ENCODE measurements at regions of chr6 and their contacts with region 1.

Region 1: DNA sequence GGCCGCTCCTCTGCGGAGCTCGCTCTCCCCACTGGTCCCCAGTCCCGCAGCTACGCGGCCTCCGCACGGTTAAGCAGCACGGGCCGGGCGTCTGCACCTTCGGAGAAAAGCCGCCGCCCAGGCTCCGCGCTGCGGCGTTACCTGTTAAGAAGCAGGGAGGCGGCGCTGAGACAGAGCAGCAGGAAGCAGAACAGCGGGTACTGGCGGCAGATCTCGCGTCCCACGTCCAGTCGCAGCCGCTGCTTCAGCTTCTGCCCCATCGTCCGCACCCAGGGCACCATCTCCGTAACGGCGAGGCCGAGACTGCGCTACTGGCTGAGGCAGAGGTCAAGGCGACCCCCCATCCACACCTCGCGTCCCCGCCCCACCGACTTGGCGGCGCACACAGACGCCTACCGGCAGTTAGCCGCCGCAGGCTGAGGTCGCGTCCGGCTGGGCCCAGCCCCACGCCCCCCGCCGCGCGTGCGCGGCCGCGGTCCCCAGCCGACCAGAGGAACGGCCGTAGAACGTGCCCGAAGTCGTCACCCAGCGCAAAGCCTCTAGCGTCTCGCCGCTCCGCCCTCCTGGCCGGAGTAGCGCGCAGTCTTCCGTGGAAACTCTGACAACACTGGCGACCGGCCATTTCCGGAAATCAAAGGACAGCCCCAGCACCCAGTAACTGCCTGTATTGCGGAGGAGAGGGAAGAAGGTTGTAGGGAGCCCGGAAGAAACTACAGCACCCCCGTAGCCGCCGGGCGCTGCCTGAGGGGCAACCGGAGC is at the start of gene SNX14:
- DNase-seq: peak; percentile 97 to 98
- ATAC-seq: peak; percentile 95 to 97 (median 96)
- H3K4me3 ChIP-seq: peak within 1 kb of the TSS; percentile 87
- H3K27ac ChIP-seq: peak within 1 kb of the TSS; percentile 92
- H3K4me1 ChIP-seq: peaks cover 15% of the 10 kb centered on the region
- H3K27me3 ChIP-seq: no peaks in the 10 kb centered on the region
- CTCF ChIP-seq: no peak
- total RNA-seq, gene SNX14: 13.4 to 17.5 (median 14.6) TPM

Region 2: GRCh38 chr6:85678602-85679444 is 85.2 kb after region 1 on chr6:
- intact Hi-C with region 1: loop called (anchors 1 to 5 kb)
- DNase-seq: peak; percentile 98 to 99
- ATAC-seq: peak; percentile 89 to 95 (median 91)
- H3K4me3 ChIP-seq: peak overlapping the region; percentile 94
- H3K27ac ChIP-seq: peak overlapping the region; percentile 97
- H3K4me1 ChIP-seq: peaks cover 23% of the 10 kb centered on the region
- H3K27me3 ChIP-seq: no peaks in the 10 kb centered on the region
- CTCF ChIP-seq: peak; percentile 5